T-cell (primary cell): ENCODE measurements at regions of chr12 and their contacts with region 1.

Region 1: DNA sequence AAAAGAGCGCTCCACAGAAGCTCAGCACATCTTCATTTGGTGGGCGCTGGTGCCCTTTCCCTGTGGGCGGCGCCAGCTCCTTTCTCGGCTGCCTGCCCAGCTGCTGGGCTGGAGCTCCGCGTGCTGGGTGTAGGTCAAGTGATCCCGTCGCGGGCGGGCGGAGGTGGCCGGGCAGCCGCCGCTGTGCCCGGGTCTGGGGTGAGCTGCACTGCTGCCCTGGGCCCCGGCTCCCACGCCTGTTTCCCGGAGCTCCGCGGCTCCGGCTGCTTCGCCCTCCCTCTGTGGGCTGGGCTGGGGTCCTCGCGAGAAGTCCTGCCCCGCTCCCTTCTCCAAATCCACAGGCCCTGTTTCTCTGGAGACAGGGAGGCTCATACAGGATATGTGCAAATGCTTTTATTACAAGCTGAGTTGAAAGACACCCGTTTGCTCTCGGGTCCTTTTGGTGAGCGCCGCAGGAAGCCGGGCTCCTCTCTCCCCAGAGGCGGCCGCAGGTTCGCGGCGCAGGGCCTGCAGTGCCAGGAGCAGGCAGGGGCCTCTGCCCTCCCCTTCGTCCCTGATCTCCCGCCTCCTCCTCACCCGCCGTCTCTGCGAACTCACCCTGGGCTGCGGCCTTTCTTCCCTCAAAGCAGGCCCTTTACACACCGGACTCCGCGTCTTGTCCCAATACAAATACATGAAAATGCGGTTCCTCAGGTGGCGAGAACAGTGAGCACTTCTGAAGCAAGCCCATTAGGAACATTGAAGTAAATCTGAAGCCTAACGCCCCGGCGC is 67.8 kb upstream of the CAPRIN2 start:
- DNase-seq: peak in 20 of 35 experiments; percentile 3 to 36 (median 18)
- ATAC-seq: peak; percentile 75 to 86 (median 82)
- H3K4me3 ChIP-seq: peak overlapping the region; percentile 59 to 78
- H3K4me3 Mint-ChIP-seq: peak overlapping the region; percentile 81 to 93 (median 87)
- H3K27ac ChIP-seq: no peak overlapping the region
- H3K27ac Mint-ChIP-seq: peak overlapping the region; percentile 57 to 62
- H3K4me1 ChIP-seq: peaks cover 0 to 18% of the 10 kb centered on the region in 2 experiments
- H3K4me1 Mint-ChIP-seq: peaks cover 15 to 22% (median 20%) of the 10 kb centered on the region in 3 donors
- H3K27me3 ChIP-seq: peaks cover 0 to 37% of the 10 kb centered on the region in 2 experiments
- H3K27me3 Mint-ChIP-seq: peaks cover 37 to 61% of the 10 kb centered on the region in 2 donors

Region 2: GRCh38 chr12:30548203-30548602 is 274.4 kb before region 1 on chr12:
- CTCF ChIA-PET with region 1: no interaction called
- POLR2A ChIA-PET with region 1: interaction called in 1 of 2 experiments, 14 read pairs
- DNase-seq: no peak
- ATAC-seq: no peak
- H3K4me3 ChIP-seq: no peak overlapping the region
- H3K4me3 Mint-ChIP-seq: no peak overlapping the region
- H3K27ac ChIP-seq: no peak overlapping the region
- H3K27ac Mint-ChIP-seq: no peak overlapping the region
- H3K4me1 ChIP-seq: no peaks in the 10 kb centered on the region
- H3K4me1 Mint-ChIP-seq: no peaks in the 10 kb centered on the region
- H3K27me3 ChIP-seq: no peaks in the 10 kb centered on the region
- H3K27me3 Mint-ChIP-seq: peaks cover 3 to 17% of the 10 kb centered on the region in 2 donors